CD4-positive, alpha-beta memory T cell (primary cell): ENCODE measurements at regions of chr5 and their contacts with region 1.

Region 1: GRCh38 chr5:95664204-95664786 is 17.7 kb downstream of the RFESD start:
- DNase-seq: peak in 4 of 5 donors; percentile 30 to 34 (median 31)
- H3K4me3 ChIP-seq: no peak overlapping the region
- H3K4me3 Mint-ChIP-seq: no peak overlapping the region
- H3K27ac ChIP-seq: no peak overlapping the region
- H3K27ac Mint-ChIP-seq: no peak overlapping the region
- H3K4me1 ChIP-seq: peaks cover 8% of the 10 kb centered on the region
- H3K4me1 Mint-ChIP-seq: peaks cover 0 to 4% (median 1%) of the 10 kb centered on the region in 4 donors
- H3K27me3 ChIP-seq: no peaks in the 10 kb centered on the region
- H3K27me3 Mint-ChIP-seq: no peaks in the 10 kb centered on the region

Region 2: GRCh38 chr5:95641741-95642220 is 22.5 kb before region 1 on chr5:
- CTCF ChIA-PET with region 1: interaction called, 22 read pairs
- POLR2A ChIA-PET with region 1: interaction called, 6 read pairs
- intact Hi-C with region 1: loop called (anchors 1 kb)
- DNase-seq: no peak
- H3K4me3 ChIP-seq: no peak overlapping the region
- H3K4me3 Mint-ChIP-seq: no peak overlapping the region
- H3K27ac ChIP-seq: no peak overlapping the region
- H3K27ac Mint-ChIP-seq: no peak overlapping the region
- H3K4me1 ChIP-seq: peaks cover 16% of the 10 kb centered on the region
- H3K4me1 Mint-ChIP-seq: peaks cover 11 to 29% (median 16%) of the 10 kb centered on the region in 4 donors
- H3K27me3 ChIP-seq: no peaks in the 10 kb centered on the region
- H3K27me3 Mint-ChIP-seq: peaks cover 2 to 4% of the 10 kb centered on the region in 2 donors

Region 3: GRCh38 chr5:95646554-95647431 is 17.5 kb before region 1 on chr5 and contains the start of gene RFESD:
- CTCF ChIA-PET with region 1: interaction called, 22 read pairs
- POLR2A ChIA-PET with region 1: interaction called, 6 read pairs
- intact Hi-C with region 1: loop called (anchors 1 kb)
- DNase-seq: peak; percentile 91 to 95 (median 92)
- H3K4me3 ChIP-seq: peak within 1 kb of the TSS; percentile 71 to 94
- H3K4me3 Mint-ChIP-seq: peak within 1 kb of the TSS; percentile 87 to 93 (median 89)
- H3K27ac ChIP-seq: peak within 1 kb of the TSS; percentile 84
- H3K27ac Mint-ChIP-seq: peak within 1 kb of the TSS; percentile 57 to 94 (median 93)
- H3K4me1 ChIP-seq: peaks cover 31% of the 10 kb centered on the region
- H3K4me1 Mint-ChIP-seq: peaks cover 20 to 42% (median 26%) of the 10 kb centered on the region in 4 donors
- H3K27me3 ChIP-seq: no peaks in the 10 kb centered on the region
- H3K27me3 Mint-ChIP-seq: no peaks in the 10 kb centered on the region
- total RNA-seq, gene RFESD: 9.1 to 9.3 TPM

Region 4: DNA sequence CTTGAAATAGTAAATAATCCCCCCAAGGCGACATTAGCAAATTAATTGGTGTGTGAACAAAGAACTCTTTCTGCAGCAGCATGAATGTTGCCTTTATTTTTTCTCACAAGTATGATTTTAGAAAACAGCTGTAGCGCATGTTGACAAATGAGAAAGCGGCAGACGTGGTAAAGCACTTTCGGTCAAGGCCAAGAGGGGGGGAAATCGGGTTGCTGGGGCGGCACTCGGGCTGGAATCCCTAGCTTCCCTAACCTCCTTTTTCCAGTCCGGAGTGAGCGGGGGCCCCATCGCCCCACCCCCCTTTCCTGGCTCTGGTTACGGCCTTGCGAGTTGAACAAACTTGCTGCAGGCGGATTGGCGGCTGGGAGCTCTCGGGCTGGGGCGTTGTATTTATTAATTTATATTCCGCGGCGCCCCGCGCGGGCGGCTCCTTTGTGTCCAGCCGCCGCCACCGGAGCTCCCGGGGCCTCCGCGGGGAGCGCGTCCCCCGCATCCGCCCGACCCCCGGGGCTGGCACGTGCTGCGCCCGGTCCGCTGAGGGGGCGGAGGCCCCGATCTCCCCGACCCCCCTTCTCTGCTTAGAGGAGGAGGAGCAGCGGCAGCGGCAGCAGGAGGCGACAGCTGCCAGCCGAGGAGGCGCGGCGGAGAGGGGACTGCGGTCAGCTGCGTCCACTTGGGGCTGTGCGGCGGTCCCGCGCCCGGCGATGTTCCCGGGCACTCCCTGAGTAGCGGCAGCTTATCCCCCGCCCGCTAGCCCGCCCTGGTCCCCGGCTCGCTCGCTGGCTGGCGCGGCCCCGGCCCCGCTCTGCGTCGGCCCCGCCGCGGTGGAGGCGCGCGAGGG is 66.7 kb after region 1 on chr5 and contains the start of gene RHOBTB3:
- CTCF ChIA-PET with region 1: interaction called, 11 read pairs
- POLR2A ChIA-PET with region 1: no interaction called
- intact Hi-C with region 1: no loop called
- DNase-seq: peak; percentile 23 to 50 (median 33)
- H3K4me3 ChIP-seq: peak within 1 kb of the TSS; percentile 7 to 46
- H3K4me3 Mint-ChIP-seq: peak within 1 kb of the TSS; percentile 79 to 87 (median 84)
- H3K27ac ChIP-seq: no peak within 1 kb of the TSS
- H3K27ac Mint-ChIP-seq: peak within 1 kb of the TSS in 1 of 7 donors; percentile 3
- H3K4me1 ChIP-seq: peaks cover 17% of the 10 kb centered on the region
- H3K4me1 Mint-ChIP-seq: peaks cover 1 to 25% (median 19%) of the 10 kb centered on the region in 4 donors
- H3K27me3 ChIP-seq: peaks cover 17% of the 10 kb centered on the region
- H3K27me3 Mint-ChIP-seq: peaks cover 31 to 36% of the 10 kb centered on the region in 2 donors
- total RNA-seq, gene RHOBTB3: 0.32 to 0.61 TPM

Region 5: GRCh38 chr5:95853490-95853889 is 189.2 kb after region 1 on chr5:
- CTCF ChIA-PET with region 1: interaction called, 25 read pairs
- POLR2A ChIA-PET with region 1: no interaction called
- intact Hi-C with region 1: no loop called
- DNase-seq: no peak
- H3K4me3 ChIP-seq: no peak overlapping the region
- H3K4me3 Mint-ChIP-seq: no peak overlapping the region
- H3K27ac ChIP-seq: no peak overlapping the region
- H3K27ac Mint-ChIP-seq: peak overlapping the region in 1 of 7 donors; percentile 12
- H3K4me1 ChIP-seq: no peaks in the 10 kb centered on the region
- H3K4me1 Mint-ChIP-seq: peaks cover 0 to 5% (median 0%) of the 10 kb centered on the region in 4 donors
- H3K27me3 ChIP-seq: no peaks in the 10 kb centered on the region
- H3K27me3 Mint-ChIP-seq: no peaks in the 10 kb centered on the region